Gastrocnemius medialis (tissue), 4 donors: ENCODE measurements at regions of chr3 and their contacts with region 1.

Region 1: GRCh38 chr3:9731206-9732079 is at the start of gene BRPF1:
- DNase-seq: peak; percentile 99 to 100
- ATAC-seq: peak; percentile 90 to 92
- H3K4me3 ChIP-seq: peak within 1 kb of the TSS; percentile 87 to 92 (median 90)
- H3K27ac ChIP-seq: peak within 1 kb of the TSS; percentile 90 to 99 (median 96)
- H3K4me1 ChIP-seq: peaks cover 16 to 21% of the 10 kb centered on the region in 2 donors
- H3K27me3 ChIP-seq: no peaks in the 10 kb centered on the region
- CTCF ChIP-seq: peak in 2 of 5 experiments; percentile 20 to 28
- POLR2A ChIP-seq: peak; percentile 27 to 58
- total RNA-seq, gene BRPF1: 12.0 to 19.5 (median 14.7) TPM

Region 2: GRCh38 chr3:9503283-9503682 is 228.2 kb before region 1 on chr3:
- in situ Hi-C with region 1: no loop called
- intact Hi-C with region 1: loop called (anchors 5 kb)
- DNase-seq: peak in 1 of 2 donors; percentile 39
- ATAC-seq: peak in 1 of 2 donors; percentile 33
- H3K4me3 ChIP-seq: no peak overlapping the region
- H3K27ac ChIP-seq: no peak overlapping the region
- H3K4me1 ChIP-seq: peaks cover 4 to 6% of the 10 kb centered on the region in 2 donors
- H3K27me3 ChIP-seq: peaks cover 22 to 26% (median 24%) of the 10 kb centered on the region in 3 donors
- CTCF ChIP-seq: peak; percentile 52 to 78 (median 69)
- POLR2A ChIP-seq: no peak

Region 3: DNA sequence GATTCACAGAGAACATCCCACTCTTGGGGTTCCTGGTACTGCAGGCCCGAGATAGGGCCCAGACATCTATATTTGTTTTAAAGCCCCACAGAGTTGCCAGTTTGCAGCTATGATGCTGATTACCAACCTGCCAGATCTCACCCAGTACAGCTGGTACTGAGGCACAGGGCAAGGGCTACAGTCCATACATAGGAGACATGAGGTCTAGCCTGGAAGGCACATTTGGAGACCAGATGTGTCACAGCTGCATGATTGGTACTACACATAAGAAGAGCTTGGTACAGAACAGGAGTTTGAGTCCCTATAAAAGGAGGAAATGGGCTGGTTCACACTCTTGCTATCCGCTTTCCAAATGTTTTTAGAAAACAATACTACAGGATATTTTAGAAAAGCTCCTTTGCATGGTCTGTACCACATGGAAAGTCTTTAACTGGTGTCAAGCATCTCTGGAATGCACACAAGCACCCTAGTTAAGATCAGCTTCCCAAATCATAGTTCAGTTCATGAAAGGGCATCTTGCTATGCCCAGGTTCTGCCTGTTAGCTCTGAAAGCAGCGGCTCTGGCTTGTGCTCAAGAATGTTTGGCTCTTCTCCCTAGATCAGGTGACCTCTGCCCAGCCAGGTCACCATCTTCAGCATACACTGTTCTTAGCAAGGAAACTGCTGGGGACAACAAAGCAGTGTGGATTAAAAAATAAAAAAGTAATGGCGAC is 61.6 kb before region 1 on chr3:
- in situ Hi-C with region 1: no loop called
- intact Hi-C with region 1: loop called (anchors 5 kb)
- DNase-seq: peak; percentile 34 to 65
- ATAC-seq: peak; percentile 89
- H3K4me3 ChIP-seq: no peak overlapping the region
- H3K27ac ChIP-seq: peak overlapping the region; percentile 32 to 79 (median 57)
- H3K4me1 ChIP-seq: peaks cover 19 to 34% of the 10 kb centered on the region in 2 donors
- H3K27me3 ChIP-seq: no peaks in the 10 kb centered on the region
- CTCF ChIP-seq: no peak
- POLR2A ChIP-seq: no peak

Region 4: DNA sequence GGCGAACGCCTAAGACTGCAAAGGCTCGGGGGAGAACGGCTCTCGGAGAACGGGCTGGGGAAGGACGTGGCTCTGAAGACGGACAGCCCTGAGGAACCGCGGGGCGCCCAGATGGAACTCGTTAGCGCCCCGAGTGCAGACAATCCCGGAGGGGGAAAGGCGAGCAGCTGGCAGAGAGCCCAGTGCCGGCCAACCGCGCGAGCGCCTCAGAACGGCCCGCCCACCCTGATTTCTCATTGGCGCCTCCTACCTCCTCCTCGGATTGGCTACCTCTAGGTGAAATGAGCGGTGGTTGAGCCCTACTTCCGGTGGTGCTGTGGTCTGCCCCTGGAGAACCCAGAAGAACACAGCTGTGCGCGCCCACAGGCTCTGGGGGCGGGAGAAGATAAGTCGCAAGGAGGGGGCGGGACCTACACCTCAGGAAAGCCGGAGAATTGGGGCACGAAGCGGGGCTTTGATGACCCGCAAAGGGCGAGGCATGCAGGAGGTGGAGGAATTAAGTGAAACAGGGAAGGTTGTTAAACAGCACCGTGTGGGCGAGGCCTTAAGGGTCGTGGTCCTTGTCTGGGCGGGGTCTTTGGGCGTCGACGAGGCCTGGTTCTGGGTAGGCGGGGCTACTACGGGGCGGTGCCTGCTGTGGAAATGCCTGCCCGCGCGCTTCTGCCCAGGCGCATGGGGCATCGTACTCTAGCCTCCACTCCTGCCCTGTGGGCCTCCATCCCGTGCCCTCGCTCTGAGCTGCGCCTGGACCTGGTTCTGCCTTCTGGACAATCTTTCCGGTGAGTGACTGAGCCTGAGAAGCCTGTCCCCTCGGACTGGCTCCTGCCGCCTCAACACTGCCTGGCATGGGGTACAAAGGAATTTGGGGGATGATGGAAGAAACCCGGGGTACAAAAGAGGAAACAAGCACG is 18.5 kb after region 1 on chr3 and contains the start of gene OGG1:
- in situ Hi-C with region 1: no loop called
- intact Hi-C with region 1: loop called (anchors 1 kb)
- DNase-seq: peak; percentile 98
- ATAC-seq: peak; percentile 98
- H3K4me3 ChIP-seq: peak within 1 kb of the TSS; percentile 77 to 95 (median 84)
- H3K27ac ChIP-seq: peak within 1 kb of the TSS; percentile 88 to 99 (median 97)
- H3K4me1 ChIP-seq: peaks cover 19 to 23% of the 10 kb centered on the region in 2 donors
- H3K27me3 ChIP-seq: no peaks in the 10 kb centered on the region
- CTCF ChIP-seq: no peak
- POLR2A ChIP-seq: peak; percentile 56 to 74
- total RNA-seq, gene OGG1: 4.1 to 13.3 (median 7.4) TPM

Region 5: GRCh38 chr3:9792405-9793160 is 61.1 kb after region 1 on chr3 and contains the starts of genes ARPC4 and TADA3:
- in situ Hi-C with region 1: no loop called
- intact Hi-C with region 1: loop called (anchors 1 kb)
- DNase-seq: peak; percentile 87 to 88
- ATAC-seq: peak; percentile 97
- H3K4me3 ChIP-seq: peak within 1 kb of the TSS; percentile 89 to 99 (median 94)
- H3K27ac ChIP-seq: peak within 1 kb of the TSS; percentile 93 to 99 (median 98)
- H3K4me1 ChIP-seq: peaks cover 20 to 27% of the 10 kb centered on the region in 2 donors
- H3K27me3 ChIP-seq: no peaks in the 10 kb centered on the region
- CTCF ChIP-seq: peak in 2 of 5 experiments; percentile 20 to 40
- POLR2A ChIP-seq: peak; percentile 63 to 83
- total RNA-seq, gene ARPC4: 96.8 to 147 (median 143) TPM
- total RNA-seq, gene TADA3: 58.1 to 83.5 (median 66.7) TPM